Activated CD4-positive, alpha-beta T cell treated with anti-CD3 and anti-CD28 coated beads, Interleukin-2, amount 10 ng/mL, durations not matched to agents 24 days and 14 days (primary cell): ENCODE measurements at regions of chrX and their contacts with region 1.

Region 1: GRCh38 chrX:30889147-30890140 is at the start of gene TAB3:
- DNase-seq: peak; percentile 97
- H3K4me3 Mint-ChIP-seq: peak within 1 kb of the TSS; percentile 88
- H3K27ac Mint-ChIP-seq: peak within 1 kb of the TSS; percentile 94
- H3K4me1 Mint-ChIP-seq: peaks cover 18% of the 10 kb centered on the region
- H3K27me3 Mint-ChIP-seq: peaks cover 2% of the 10 kb centered on the region
- total RNA-seq, gene TAB3: 21.9 and 23.7 TPM in 2 replicates

Region 2: DNA sequence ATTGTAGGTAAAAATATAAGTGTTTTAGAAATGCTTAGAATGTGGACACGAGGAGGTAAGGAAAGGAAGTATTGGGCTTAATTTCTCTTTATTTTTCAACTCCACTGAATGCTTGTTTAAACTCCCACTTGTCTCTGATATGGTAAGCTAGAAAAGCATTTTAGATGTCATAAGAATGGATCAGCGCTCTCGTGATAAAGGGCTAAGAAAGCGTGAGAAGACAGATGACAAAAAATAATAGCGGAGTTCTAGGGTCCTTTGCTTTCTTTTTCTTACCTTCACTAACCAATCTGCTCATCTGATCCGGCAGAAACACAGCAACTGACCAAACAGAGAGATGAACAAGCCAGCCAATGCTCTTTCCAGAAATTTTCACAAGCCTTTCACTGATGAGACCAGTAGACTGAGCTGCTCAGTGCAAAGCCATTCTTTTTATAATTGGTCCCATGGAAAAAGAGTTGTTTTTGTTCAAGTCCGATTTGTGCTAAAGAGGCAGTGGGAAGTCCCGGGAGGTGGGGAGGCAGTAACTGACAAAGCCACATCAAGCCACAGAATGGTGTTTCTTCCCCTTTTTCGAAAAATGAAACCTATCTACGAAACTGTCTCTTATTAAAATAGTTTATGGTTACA is 312.0 kb before region 1 on chrX and contains the start of gene TASL:
- intact Hi-C with region 1: loop called (anchors 5 kb)
- DNase-seq: peak; percentile 83
- H3K4me3 Mint-ChIP-seq: peak within 1 kb of the TSS; percentile 95
- H3K27ac Mint-ChIP-seq: peak within 1 kb of the TSS; percentile 98
- H3K4me1 Mint-ChIP-seq: peaks cover 13% of the 10 kb centered on the region
- H3K27me3 Mint-ChIP-seq: no peaks in the 10 kb centered on the region
- total RNA-seq, gene TASL: 4.2 and 5.1 TPM in 2 replicates

Region 3: GRCh38 chrX:30713061-30713525 is 176.4 kb before region 1 on chrX:
- intact Hi-C with region 1: loop called (anchors 2 kb)
- DNase-seq: peak; percentile 82
- H3K4me3 Mint-ChIP-seq: peak overlapping the region; percentile 47
- H3K27ac Mint-ChIP-seq: peak overlapping the region; percentile 95
- H3K4me1 Mint-ChIP-seq: peaks cover 35% of the 10 kb centered on the region
- H3K27me3 Mint-ChIP-seq: no peaks in the 10 kb centered on the region

Region 4: DNA sequence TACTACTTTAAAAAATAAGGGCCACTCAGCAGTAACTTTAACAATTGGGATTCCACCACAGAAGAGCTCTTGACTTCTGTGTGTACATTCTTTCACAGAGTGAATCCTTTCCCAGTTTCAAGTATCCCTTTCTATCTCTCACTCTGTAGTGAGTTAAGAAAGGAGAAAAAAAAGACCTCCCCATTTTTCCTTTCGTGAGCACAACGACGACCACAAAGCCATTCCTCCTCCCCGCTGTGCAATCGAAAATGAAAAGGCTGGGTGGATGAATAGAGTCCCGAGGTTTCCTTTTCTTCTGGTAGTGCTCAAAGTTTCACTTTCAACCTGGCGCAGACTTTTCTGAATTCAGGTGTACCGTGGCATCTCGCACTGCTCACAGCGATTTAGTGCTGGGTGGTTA is 58.4 kb before region 1 on chrX:
- intact Hi-C with region 1: loop called (anchors 1 kb)
- DNase-seq: peak; percentile 83
- H3K4me3 Mint-ChIP-seq: peak overlapping the region; percentile 78
- H3K27ac Mint-ChIP-seq: peak overlapping the region; percentile 82
- H3K4me1 Mint-ChIP-seq: peaks cover 21% of the 10 kb centered on the region
- H3K27me3 Mint-ChIP-seq: no peaks in the 10 kb centered on the region

Region 5: DNA sequence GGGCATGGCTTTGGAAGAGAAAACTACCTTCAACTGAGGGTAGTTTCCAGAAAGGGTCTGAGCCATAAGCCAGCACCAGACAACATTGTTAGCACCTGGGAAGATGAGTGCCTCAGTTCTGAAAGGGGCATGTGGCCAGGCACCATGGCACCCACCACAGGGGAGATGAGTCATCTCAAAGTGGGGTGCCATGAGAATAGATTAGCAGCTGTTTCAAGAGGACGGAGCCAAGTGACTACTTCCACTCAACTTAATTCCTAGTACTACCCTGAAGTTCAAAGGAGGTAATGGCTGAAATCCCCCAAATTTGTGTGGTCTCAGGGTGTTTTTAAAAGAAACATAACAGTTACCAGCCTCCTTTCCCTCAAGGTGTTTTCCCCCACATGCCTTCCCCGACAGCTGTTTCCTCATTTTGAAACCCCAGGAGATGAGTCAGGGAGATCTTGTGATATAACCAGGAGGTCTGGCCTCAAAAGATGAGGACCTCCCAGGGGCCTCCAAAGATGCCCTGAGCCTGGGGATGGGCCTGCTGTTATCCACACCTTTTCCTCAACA is 210.2 kb after region 1 on chrX:
- intact Hi-C with region 1: loop called (anchors 10 kb)
- DNase-seq: peak; percentile 79
- H3K4me3 Mint-ChIP-seq: no peak overlapping the region
- H3K27ac Mint-ChIP-seq: peak overlapping the region; percentile 79
- H3K4me1 Mint-ChIP-seq: peaks cover 12% of the 10 kb centered on the region
- H3K27me3 Mint-ChIP-seq: no peaks in the 10 kb centered on the region